Activated T-helper 1 cell treated with anti-CD3 and anti-CD28 coated beads, Interleukin-12 subunit alpha, Interleukin-12 subunit beta, Interleukin-2, Interleukin-4 antibody, amounts not matched to agents 30 ng/mL and 10 ng/mL and 1 ng/mL, durations not matched to agents 14 hours and 24 hours and 36 hours (primary cell): ENCODE measurements at regions of chr1 and their contacts with region 1.

Region 1: GRCh38 chr1:183590244-183591191 is at the start of gene NCF2:
- DNase-seq: peak; percentile 68
- H3K4me3 Mint-ChIP-seq: peak within 1 kb of the TSS; percentile 69
- H3K27ac Mint-ChIP-seq: peak within 1 kb of the TSS; percentile 84
- H3K4me1 Mint-ChIP-seq: peaks cover 50% of the 10 kb centered on the region
- H3K27me3 Mint-ChIP-seq: peaks cover 2% of the 10 kb centered on the region
- total RNA-seq, gene NCF2: 4.8 and 5.9 TPM in 2 replicates

Region 2: DNA sequence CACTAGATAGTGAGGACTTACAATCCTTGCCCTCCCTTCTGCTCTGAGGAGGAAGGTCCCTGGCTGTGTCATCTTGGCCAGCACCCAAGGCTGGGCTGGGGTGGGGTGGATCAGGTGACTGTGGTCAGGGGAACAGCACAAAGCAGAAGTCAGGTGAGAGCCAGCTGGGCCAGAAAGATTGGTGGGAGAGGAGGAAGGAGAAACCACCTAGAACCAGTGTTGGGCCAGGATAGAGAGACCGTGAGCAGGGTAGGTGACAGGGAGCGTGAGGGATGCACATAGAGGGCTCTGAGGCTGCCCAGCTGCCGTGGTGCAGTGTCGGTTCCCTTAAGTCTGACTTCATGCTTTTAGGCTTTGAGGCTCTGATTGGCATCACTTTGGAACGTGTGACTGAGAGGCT is 22.9 kb before region 1 on chr1:
- intact Hi-C with region 1: loop called (anchors 1 kb)
- DNase-seq: no peak
- H3K4me3 Mint-ChIP-seq: no peak overlapping the region
- H3K27ac Mint-ChIP-seq: peak overlapping the region; percentile 66
- H3K4me1 Mint-ChIP-seq: peaks cover 23% of the 10 kb centered on the region
- H3K27me3 Mint-ChIP-seq: no peaks in the 10 kb centered on the region